ENCODE measurements at regions of chr3 and their contacts with region 1.

Region 1: DNA sequence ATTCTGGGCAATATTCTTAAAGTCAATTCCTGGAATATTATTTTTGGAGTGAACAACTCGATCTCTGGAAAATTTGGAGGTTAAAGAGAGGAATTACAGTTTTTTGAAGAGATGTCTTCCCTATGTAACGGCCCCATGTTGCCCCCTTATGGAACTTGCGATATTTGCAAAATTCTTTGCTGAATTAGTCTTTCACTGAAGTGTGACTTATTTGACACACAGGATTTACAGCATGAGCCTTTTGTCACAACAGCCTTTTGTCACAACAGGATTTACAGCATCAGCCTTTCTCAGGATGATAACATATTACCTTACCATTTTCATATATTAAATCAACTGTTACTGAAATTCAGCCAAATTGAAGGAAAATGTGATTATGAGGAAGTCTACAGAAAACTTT is 37.8 kb upstream of the SPTSSB start:
- DNase-seq: peak in 4 of 5 donors; percentile 37 to 56 (median 45)
- H3K4me3 ChIP-seq: no peak overlapping the region
- H3K4me3 Mint-ChIP-seq: no peak overlapping the region
- H3K27ac ChIP-seq: no peak overlapping the region
- H3K27ac Mint-ChIP-seq: no peak overlapping the region
- H3K4me1 ChIP-seq: peaks cover 25% of the 10 kb centered on the region
- H3K4me1 Mint-ChIP-seq: peaks cover 20 to 34% (median 27%) of the 10 kb centered on the region in 4 donors
- H3K27me3 ChIP-seq: no peaks in the 10 kb centered on the region
- H3K27me3 Mint-ChIP-seq: peaks cover 3 to 4% of the 10 kb centered on the region in 2 donors

Region 2: GRCh38 chr3:160343132-160343531 is 1065.9 kb before region 1 on chr3:
- CTCF ChIA-PET with region 1: no interaction called
- POLR2A ChIA-PET with region 1: no interaction called
- intact Hi-C with region 1: no loop called
- DNase-seq: peak in 1 of 5 donors; percentile 1
- H3K4me3 ChIP-seq: no peak overlapping the region
- H3K4me3 Mint-ChIP-seq: no peak overlapping the region
- H3K27ac ChIP-seq: no peak overlapping the region
- H3K27ac Mint-ChIP-seq: no peak overlapping the region
- H3K4me1 ChIP-seq: no peaks in the 10 kb centered on the region
- H3K4me1 Mint-ChIP-seq: no peaks in the 10 kb centered on the region
- H3K27me3 ChIP-seq: no peaks in the 10 kb centered on the region
- H3K27me3 Mint-ChIP-seq: no peaks in the 10 kb centered on the region

Region 3: GRCh38 chr3:161096771-161097355 is 312.2 kb before region 1 on chr3:
- CTCF ChIA-PET with region 1: interaction called, 4 read pairs
- POLR2A ChIA-PET with region 1: no interaction called
- intact Hi-C with region 1: loop called (anchors 1 kb)
- DNase-seq: peak in 4 of 5 donors; percentile 6 to 13 (median 7)
- H3K4me3 ChIP-seq: no peak overlapping the region
- H3K4me3 Mint-ChIP-seq: no peak overlapping the region
- H3K27ac ChIP-seq: no peak overlapping the region
- H3K27ac Mint-ChIP-seq: no peak overlapping the region
- H3K4me1 ChIP-seq: no peaks in the 10 kb centered on the region
- H3K4me1 Mint-ChIP-seq: no peaks in the 10 kb centered on the region
- H3K27me3 ChIP-seq: no peaks in the 10 kb centered on the region
- H3K27me3 Mint-ChIP-seq: peaks cover 0 to 4% of the 10 kb centered on the region in 2 donors

Region 4: GRCh38 chr3:161305095-161305991 is 103.7 kb before region 1 on chr3:
- CTCF ChIA-PET with region 1: interaction called, 26 read pairs
- POLR2A ChIA-PET with region 1: no interaction called
- intact Hi-C with region 1: loop called (anchors 1 kb)
- DNase-seq: peak in 4 of 5 donors; percentile 11 to 26 (median 17)
- H3K4me3 ChIP-seq: no peak overlapping the region
- H3K4me3 Mint-ChIP-seq: peak overlapping the region in 2 of 8 donors; percentile 18 to 31
- H3K27ac ChIP-seq: no peak overlapping the region
- H3K27ac Mint-ChIP-seq: no peak overlapping the region
- H3K4me1 ChIP-seq: peaks cover 24% of the 10 kb centered on the region
- H3K4me1 Mint-ChIP-seq: peaks cover 22 to 42% (median 28%) of the 10 kb centered on the region in 4 donors
- H3K27me3 ChIP-seq: no peaks in the 10 kb centered on the region
- H3K27me3 Mint-ChIP-seq: no peaks in the 10 kb centered on the region

Region 5: GRCh38 chr3:161371430-161372326 is 37.4 kb before region 1 on chr3 and contains the start of gene SPTSSB:
- CTCF ChIA-PET with region 1: interaction called, 23 read pairs
- POLR2A ChIA-PET with region 1: no interaction called
- intact Hi-C with region 1: loop called (anchors 5 kb)
- DNase-seq: peak; percentile 41 to 57 (median 45)
- H3K4me3 ChIP-seq: peak within 1 kb of the TSS; percentile 46 to 69
- H3K4me3 Mint-ChIP-seq: peak within 1 kb of the TSS; percentile 83 to 95 (median 88)
- H3K27ac ChIP-seq: no peak within 1 kb of the TSS
- H3K27ac Mint-ChIP-seq: peak within 1 kb of the TSS in 4 of 7 donors; percentile 4 to 91 (median 72)
- H3K4me1 ChIP-seq: peaks cover 17% of the 10 kb centered on the region
- H3K4me1 Mint-ChIP-seq: peaks cover 4 to 25% (median 12%) of the 10 kb centered on the region in 4 donors
- H3K27me3 ChIP-seq: peaks cover 5% of the 10 kb centered on the region
- H3K27me3 Mint-ChIP-seq: peaks cover 4 to 17% of the 10 kb centered on the region in 2 donors
- total RNA-seq, gene SPTSSB: not detected

Region 6: DNA sequence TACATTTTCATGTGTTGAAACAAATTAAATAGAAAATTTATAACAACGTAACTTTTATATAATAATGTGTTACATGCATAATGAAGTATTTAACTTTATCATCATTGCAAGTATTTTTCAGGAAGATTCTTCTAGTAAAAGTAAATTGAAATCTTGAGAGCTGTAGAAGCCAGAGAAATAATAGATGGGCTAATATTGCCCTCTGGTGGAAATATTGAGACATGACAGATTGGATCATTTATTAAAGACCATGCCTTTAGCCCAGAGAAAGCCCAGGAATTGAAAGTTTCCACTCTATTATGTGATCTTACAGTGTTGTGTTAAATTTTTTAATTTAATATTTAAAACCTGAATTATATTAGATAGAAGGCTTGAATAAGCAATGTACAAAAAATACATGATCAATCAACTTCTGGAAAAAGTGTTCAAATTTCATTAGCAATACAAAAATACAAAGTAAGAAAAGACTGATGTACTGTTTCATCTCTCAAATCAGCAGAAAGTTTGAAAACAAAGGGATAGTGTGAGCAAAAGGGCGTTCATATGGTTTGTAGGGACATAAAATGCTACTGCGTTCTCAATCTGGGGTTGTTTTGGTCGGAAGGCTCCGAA is 14.9 kb after region 1 on chr3:
- CTCF ChIA-PET with region 1: interaction called, 18 read pairs
- POLR2A ChIA-PET with region 1: no interaction called
- intact Hi-C with region 1: no loop called
- DNase-seq: peak in 4 of 5 donors; percentile 45 to 50 (median 48)
- H3K4me3 ChIP-seq: no peak overlapping the region
- H3K4me3 Mint-ChIP-seq: no peak overlapping the region
- H3K27ac ChIP-seq: no peak overlapping the region
- H3K27ac Mint-ChIP-seq: no peak overlapping the region
- H3K4me1 ChIP-seq: peaks cover 8% of the 10 kb centered on the region
- H3K4me1 Mint-ChIP-seq: peaks cover 6 to 11% (median 9%) of the 10 kb centered on the region in 4 donors
- H3K27me3 ChIP-seq: no peaks in the 10 kb centered on the region
- H3K27me3 Mint-ChIP-seq: no peaks in the 10 kb centered on the region

Measured in CD4-positive, alpha-beta memory T cell (primary cell).